WTC11 (cell line): ENCODE measurements at regions of chr6 and their contacts with region 1.

Region 1: DNA sequence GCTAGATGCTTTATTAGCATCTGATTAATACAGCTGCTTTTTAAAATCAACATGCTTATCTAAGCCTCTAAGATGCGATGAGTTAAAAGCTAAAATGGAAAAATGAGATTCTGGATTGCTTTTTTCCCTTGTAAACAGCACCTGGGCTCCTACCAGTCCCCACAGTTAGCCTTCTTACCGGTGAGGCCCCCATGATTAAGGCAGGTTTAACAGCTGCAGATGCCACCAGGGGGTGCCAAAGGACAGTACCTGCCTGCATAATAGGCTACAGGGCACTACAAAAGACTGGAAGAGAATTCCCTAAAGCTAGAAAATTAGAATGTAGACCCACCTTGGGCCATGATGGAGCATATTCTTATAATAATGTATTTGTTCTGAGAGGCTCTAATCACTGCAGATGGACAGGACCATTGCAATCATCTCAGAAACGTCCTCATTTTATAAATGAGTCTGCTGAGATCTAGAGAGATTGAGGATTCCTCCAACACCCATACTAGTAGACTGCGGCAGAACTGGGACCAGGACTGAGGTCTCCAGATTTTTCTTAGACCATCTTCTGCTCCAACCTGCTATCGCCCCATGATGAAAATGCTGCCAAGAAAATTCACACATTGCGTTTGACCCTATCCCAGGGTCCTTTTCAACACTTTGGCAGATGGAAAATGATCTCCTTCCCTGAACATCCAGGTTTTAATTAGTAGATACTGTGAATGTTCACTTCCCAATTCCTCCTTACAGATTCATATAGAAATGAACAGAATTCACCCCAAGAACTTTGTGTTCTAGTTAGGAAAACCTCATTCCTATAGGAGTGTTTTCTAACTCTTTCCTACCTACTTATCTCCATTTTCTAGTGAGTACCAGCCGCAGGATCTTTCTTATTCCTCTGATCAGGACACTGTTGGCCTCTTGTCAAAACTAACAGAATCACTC is 148.8 kb downstream of the RPS12 start:
- DNase-seq: peak; percentile 91
- ATAC-seq: peak; percentile 98
- H3K4me3 Mint-ChIP-seq: no peak overlapping the region
- H3K27ac Mint-ChIP-seq: no peak overlapping the region; the same call in 1 of the 2 replicates
- H3K4me1 Mint-ChIP-seq: peaks cover 26% of the 10 kb centered on the region
- H3K27me3 Mint-ChIP-seq: no peaks in the 10 kb centered on the region
- CTCF ChIP-seq: peak; percentile 74

Region 2: DNA sequence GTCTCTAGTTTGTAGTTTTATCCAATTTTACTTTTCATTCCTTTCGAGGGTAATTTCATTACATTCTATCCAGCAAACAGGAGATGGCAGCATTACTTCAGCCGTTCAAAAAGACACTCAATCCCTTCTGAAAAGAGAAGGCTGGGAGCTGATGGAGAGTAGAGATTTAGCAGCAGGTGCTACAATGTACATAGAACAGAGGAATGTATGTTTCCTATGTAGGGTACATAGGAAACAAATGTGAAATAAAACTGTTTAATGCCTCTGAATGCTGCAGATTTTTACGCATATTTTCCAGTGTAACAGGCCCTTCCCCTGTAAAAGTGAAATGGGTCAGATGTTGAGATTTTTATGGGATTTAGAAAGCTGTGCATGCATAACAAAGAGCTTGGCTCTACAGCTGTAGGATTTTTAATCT is 132.9 kb before region 1 on chr6:
- CTCF ChIA-PET with region 1: interaction called, 56 read pairs
- POLR2A ChIA-PET with region 1: no interaction called
- DNase-seq: no peak
- ATAC-seq: peak; percentile 91
- H3K4me3 Mint-ChIP-seq: no peak overlapping the region
- H3K27ac Mint-ChIP-seq: no peak overlapping the region
- H3K4me1 Mint-ChIP-seq: no peaks in the 10 kb centered on the region
- H3K27me3 Mint-ChIP-seq: no peaks in the 10 kb centered on the region
- CTCF ChIP-seq: no peak; the same call in 1 of the 2 replicates

Region 3: DNA sequence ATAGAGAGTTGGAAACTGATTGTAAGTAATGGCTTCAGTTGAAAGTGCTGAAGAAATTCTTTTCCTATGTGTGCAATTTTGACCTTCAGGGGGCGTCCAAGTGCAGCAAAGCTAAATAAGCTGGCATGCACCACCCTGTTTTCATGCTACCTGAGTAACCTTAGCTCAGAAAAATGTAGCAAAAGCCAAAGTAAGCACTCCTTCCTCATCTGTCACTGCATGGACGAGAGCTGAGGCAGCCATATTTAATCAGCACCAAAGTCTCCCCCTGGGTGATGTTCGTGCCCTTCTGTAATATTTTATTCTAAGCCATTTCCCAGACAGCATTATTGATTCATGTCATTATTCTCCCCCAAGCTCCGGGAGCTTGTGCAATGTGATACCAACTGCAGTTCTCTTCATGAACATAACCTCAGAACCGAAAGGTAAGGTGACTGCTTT is 25.7 kb before region 1 on chr6:
- CTCF ChIA-PET with region 1: interaction called, 33 read pairs
- POLR2A ChIA-PET with region 1: no interaction called
- DNase-seq: peak; percentile 62
- ATAC-seq: peak; percentile 90
- H3K4me3 Mint-ChIP-seq: no peak overlapping the region
- H3K27ac Mint-ChIP-seq: no peak overlapping the region
- H3K4me1 Mint-ChIP-seq: peaks cover 13% of the 10 kb centered on the region
- H3K27me3 Mint-ChIP-seq: no peaks in the 10 kb centered on the region
- CTCF ChIP-seq: peak; percentile 37; the same call in 1 of the 2 replicates

Region 4: GRCh38 chr6:132948889-132949288 is 14.3 kb before region 1 on chr6:
- CTCF ChIA-PET with region 1: interaction called, 10 read pairs
- POLR2A ChIA-PET with region 1: no interaction called
- DNase-seq: no peak
- ATAC-seq: peak; percentile 39
- H3K4me3 Mint-ChIP-seq: no peak overlapping the region
- H3K27ac Mint-ChIP-seq: no peak overlapping the region
- H3K4me1 Mint-ChIP-seq: 0 out of 2 replicates have a peak, but pooled peaks cover 3% of the 10 kb centered on the region
- H3K27me3 Mint-ChIP-seq: no peaks in the 10 kb centered on the region
- CTCF ChIP-seq: no peak

Region 5: GRCh38 chr6:132973514-132973993 is 10.4 kb after region 1 on chr6:
- CTCF ChIA-PET with region 1: interaction called, 32 read pairs
- POLR2A ChIA-PET with region 1: no interaction called
- DNase-seq: no peak
- ATAC-seq: peak; percentile 46; the same call in 1 of the 2 replicates
- H3K4me3 Mint-ChIP-seq: no peak overlapping the region
- H3K27ac Mint-ChIP-seq: no peak overlapping the region
- H3K4me1 Mint-ChIP-seq: peaks cover 25% of the 10 kb centered on the region
- H3K27me3 Mint-ChIP-seq: no peaks in the 10 kb centered on the region
- CTCF ChIP-seq: no peak